ENCODE measurements at regions of chr7 and their contacts with region 1.

Region 1: GRCh38 chr7:95454438-95455045 is 19.7 kb upstream of the PON2 start:
- DNase-seq: no peak
- H3K4me3 ChIP-seq: no peak overlapping the region
- H3K27ac ChIP-seq: no peak overlapping the region
- H3K4me1 ChIP-seq: no peaks in the 10 kb centered on the region
- H3K27me3 ChIP-seq: no peaks in the 10 kb centered on the region
- CTCF ChIP-seq: no peak
- EP300 ChIP-seq: no peak
- POLR2A ChIP-seq: no peak

Region 2: DNA sequence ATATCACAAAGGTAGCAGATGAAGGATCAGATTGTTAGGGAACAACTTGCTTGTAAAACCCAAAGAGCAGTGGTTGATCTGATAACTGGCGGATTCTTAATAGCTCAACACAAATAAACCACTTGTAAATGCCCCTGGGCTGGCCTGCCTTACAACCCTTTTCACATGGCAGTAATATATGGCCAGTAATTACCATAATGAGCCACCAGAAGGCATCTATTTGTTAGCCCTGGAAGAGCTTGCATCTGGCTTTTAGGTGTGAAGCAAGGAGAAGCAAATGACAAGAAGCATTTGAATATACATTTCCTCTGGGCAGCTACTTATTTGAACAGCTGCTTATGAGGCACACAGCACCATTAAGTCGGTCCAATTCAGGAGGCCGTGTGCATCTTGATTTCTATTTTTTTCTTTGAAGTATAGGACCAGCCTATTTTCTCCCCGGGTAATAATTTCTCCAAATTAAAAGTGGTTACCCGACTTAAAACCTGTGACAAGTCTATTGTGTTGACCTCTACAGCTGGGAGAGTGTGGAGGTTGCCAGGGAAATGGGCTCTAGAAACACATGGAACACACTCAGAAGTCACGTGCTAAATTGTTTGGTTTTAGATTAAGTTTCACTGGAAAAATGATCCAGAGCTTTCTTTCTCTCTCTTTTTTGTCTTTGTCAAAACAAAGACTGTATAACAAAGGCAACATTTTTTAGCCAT is 1141.7 kb after region 1 on chr7:
- intact Hi-C with region 1: loop called in 1 of 4 experiments (anchors 5 kb)
- DNase-seq: peak in 3 of 5 donors; percentile 14 to 31 (median 25)
- H3K4me3 ChIP-seq: no peak overlapping the region
- H3K27ac ChIP-seq: peak overlapping the region in 1 of 2 donors; percentile 26
- H3K4me1 ChIP-seq: peaks cover 4% of the 10 kb centered on the region
- H3K27me3 ChIP-seq: no peaks in the 10 kb centered on the region
- CTCF ChIP-seq: no peak
- EP300 ChIP-seq: no peak
- POLR2A ChIP-seq: no peak

Measured in ovary (tissue), 10 donors.